MCF 10A (cell line): ENCODE measurements at regions of chr9 and their contacts with region 1.

Region 1: DNA sequence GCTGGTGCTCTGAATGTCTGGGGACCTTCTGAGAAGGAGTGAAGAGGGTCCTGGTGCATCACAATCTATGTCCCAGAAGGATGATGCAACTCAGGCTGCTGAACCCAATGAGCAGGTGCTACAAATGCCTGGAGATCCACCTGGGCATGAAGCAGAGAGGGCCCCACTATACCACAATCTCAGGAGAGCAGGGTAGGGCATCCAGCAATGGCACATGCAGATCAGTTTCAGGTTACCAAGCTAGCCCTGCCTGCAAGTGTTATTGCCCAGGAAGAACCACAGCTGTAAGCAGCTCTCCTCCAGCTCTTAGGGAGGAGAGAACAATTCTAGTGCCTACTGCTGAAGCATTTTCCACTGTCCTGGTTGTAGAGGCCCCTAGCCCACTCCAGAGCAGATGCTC is 389.2 kb upstream of the TNC start:
- DNase-seq: no peak
- H3K4me3 Mint-ChIP-seq: no peak overlapping the region
- H3K27ac Mint-ChIP-seq: no peak overlapping the region
- H3K4me1 Mint-ChIP-seq: peaks cover 5% of the 10 kb centered on the region
- H3K27me3 Mint-ChIP-seq: no peaks in the 10 kb centered on the region
- CTCF ChIP-seq: no peak

Region 2: GRCh38 chr9:115481769-115482168 is 25.4 kb before region 1 on chr9:
- CTCF ChIA-PET with region 1: no interaction called
- POLR2A ChIA-PET with region 1: no interaction called
- intact Hi-C with region 1: loop called (anchors 2 kb)
- DNase-seq: no peak
- H3K4me3 Mint-ChIP-seq: no peak overlapping the region
- H3K27ac Mint-ChIP-seq: no peak overlapping the region
- H3K4me1 Mint-ChIP-seq: no peaks in the 10 kb centered on the region
- H3K27me3 Mint-ChIP-seq: no peaks in the 10 kb centered on the region
- CTCF ChIP-seq: no peak